Left ventricle myocardium superior (tissue), 1 donor: ENCODE measurements at regions of chr2 and their contacts with region 1.

Region 1: DNA sequence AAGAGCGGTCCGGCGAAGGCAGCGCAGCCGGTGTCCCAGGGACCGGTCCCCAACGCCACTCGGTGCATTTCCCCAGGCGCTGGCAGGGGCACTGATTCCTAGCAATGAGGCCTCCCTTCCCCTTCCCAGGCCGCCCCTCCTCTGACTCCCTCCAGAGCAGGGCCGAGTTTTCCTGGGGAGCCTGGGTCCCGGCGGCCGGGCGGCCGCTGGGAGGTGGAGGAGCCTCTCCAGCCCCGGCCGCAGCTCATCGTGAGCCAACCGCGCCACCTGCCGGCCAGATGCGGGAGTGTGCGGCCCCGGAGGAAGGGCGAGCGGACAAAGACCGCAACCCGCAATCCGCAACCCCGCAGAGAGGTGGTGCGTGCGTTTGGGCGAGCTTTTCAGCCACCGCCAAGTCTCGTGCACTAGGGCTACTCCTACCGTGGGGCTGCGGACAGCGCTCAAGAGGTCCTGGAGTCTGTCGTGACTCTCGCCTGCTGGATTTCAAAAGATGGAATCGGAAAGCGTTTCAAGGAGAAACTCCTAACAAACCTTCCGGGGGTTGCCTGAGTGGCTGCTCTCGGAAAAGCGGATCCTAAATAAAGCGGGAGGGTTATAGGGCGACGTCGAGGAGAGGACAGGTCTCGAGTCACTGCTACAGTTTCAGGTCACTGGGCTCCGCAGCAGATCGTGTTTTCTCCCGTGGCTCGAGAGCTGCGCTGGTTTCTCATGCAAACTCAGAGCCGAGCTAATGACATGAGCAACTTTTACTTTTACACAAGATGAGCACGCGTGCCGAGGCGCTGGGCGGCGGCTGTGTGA is 1.5 kb upstream of the EPHA4 start:
- DNase-seq: peak; percentile 93
- ATAC-seq: peak; percentile 82

Region 2: DNA sequence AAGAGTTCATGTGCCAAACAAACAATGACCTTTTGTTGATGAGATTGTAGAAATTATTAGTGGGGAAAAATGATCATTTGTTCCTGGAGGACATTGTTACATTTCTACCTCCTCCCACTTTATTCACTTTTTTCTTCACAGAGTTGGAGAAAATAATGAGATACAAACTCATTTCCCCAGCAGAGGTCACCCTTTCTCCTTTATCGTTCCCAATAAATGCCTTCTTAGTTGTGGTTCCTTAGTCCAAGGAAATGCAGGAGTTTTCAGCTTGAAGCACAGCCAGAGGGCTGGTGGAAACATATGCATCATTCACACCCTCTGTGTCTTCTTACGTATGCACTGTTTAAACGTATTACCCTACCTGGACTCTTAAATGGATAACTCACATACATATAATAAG is 1837.4 kb before region 1 on chr2:
- intact Hi-C with region 1: loop called (anchors 10 kb)
- DNase-seq: no peak
- ATAC-seq: peak; percentile 66

Region 3: GRCh38 chr2:220687231-220687843 is 886.3 kb before region 1 on chr2:
- intact Hi-C with region 1: loop called (anchors 5 kb)
- DNase-seq: peak; percentile 65
- ATAC-seq: peak; percentile 86

Region 4: DNA sequence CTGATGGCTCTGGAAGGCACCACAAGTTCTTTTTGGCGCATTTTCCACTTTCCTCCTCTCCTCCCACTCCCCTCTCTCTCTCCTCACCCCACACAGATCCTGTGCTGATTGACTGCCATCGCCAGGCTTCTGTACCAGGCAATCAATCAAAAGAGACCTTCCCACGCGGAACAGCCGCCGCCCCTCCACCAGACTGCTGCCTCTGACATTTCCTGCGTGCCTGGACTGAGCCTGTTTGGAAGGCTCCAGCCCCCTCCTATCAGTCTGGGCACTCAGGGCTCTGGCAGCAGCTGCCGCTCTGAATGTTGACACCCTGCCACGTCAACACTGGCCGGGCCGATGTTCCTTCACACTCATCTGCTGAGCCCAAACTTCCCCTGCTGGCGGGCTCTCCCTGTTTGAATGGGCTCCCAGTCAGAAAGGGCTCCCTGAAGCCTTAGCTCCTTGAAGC is 469.2 kb before region 1 on chr2:
- intact Hi-C with region 1: loop called (anchors 10 kb)
- DNase-seq: peak; percentile 91
- ATAC-seq: peak; percentile 99